Activated naive CD4-positive, alpha-beta T cell treated with anti-CD3 and anti-CD28 coated beads for 36 hours (primary cell): ENCODE measurements at regions of chr10 and their contacts with region 1.

Region 1: DNA sequence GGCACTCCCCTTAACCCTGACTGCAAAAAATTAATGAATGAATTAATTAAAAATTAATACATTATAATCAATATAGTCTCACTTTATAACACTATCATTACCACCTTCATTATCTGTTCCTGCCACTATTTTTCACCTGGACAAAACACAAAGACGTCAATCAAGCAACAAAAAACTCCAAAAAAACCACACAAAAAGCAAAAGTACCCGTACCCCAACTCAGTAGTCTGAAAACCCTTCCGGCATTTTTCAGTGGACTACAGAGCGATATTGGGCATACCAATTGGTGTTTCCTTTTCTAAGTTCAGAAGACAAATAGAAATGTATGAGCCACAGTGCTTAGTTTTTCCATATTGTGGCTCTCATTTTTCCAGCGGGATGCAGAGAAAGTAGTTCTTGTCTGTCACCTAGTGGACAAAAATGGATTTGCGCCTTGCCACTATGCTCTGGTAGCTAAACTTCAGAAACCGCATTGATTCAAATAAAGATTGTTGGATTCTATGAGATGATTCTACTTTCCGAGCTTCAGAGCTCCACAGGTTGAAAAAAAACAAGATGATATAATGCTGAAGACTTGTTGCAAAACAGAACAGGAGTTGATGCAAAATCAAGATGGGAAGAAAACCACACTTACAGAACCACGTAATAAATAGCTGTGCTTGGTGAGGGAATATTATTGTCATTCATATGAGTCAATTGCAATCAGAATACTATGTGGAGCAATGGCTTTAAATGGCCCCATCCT is 50.6 kb upstream of the ITGB1 start:
- DNase-seq: peak; percentile 81
- H3K4me3 Mint-ChIP-seq: peak overlapping the region; percentile 52
- H3K27ac Mint-ChIP-seq: peak overlapping the region; percentile 9
- H3K4me1 Mint-ChIP-seq: peaks cover 34% of the 10 kb centered on the region
- H3K27me3 Mint-ChIP-seq: peaks cover 9% of the 10 kb centered on the region

Region 2: GRCh38 chr10:32190890-32191491 is 817.7 kb before region 1 on chr10:
- CTCF ChIA-PET with region 1: no interaction called
- intact Hi-C with region 1: loop called (anchors 5 kb)
- DNase-seq: no peak
- H3K4me3 Mint-ChIP-seq: no peak overlapping the region
- H3K27ac Mint-ChIP-seq: no peak overlapping the region
- H3K4me1 Mint-ChIP-seq: peaks cover 2% of the 10 kb centered on the region
- H3K27me3 Mint-ChIP-seq: no peaks in the 10 kb centered on the region

Region 3: GRCh38 chr10:32367793-32368453 is 640.7 kb before region 1 on chr10:
- CTCF ChIA-PET with region 1: no interaction called
- intact Hi-C with region 1: loop called (anchors 2 kb)
- DNase-seq: peak; percentile 88
- H3K4me3 Mint-ChIP-seq: peak overlapping the region; percentile 41
- H3K27ac Mint-ChIP-seq: peak overlapping the region; percentile 59
- H3K4me1 Mint-ChIP-seq: peaks cover 65% of the 10 kb centered on the region
- H3K27me3 Mint-ChIP-seq: no peaks in the 10 kb centered on the region

Region 4: GRCh38 chr10:32790483-32790882 is 218.2 kb before region 1 on chr10:
- CTCF ChIA-PET with region 1: interaction called, 11 read pairs
- intact Hi-C with region 1: loop called (anchors 1 kb)
- DNase-seq: no peak
- H3K4me3 Mint-ChIP-seq: no peak overlapping the region
- H3K27ac Mint-ChIP-seq: no peak overlapping the region
- H3K4me1 Mint-ChIP-seq: no peaks in the 10 kb centered on the region
- H3K27me3 Mint-ChIP-seq: no peaks in the 10 kb centered on the region

Region 5: GRCh38 chr10:32980558-32981468 is 27.9 kb before region 1 on chr10:
- CTCF ChIA-PET with region 1: interaction called, 7 read pairs
- intact Hi-C with region 1: loop called (anchors 2 kb)
- DNase-seq: peak; percentile 90
- H3K4me3 Mint-ChIP-seq: peak overlapping the region; percentile 87
- H3K27ac Mint-ChIP-seq: peak overlapping the region; percentile 73
- H3K4me1 Mint-ChIP-seq: peaks cover 21% of the 10 kb centered on the region
- H3K27me3 Mint-ChIP-seq: no peaks in the 10 kb centered on the region

Region 6: GRCh38 chr10:33248638-33249037 is 240.0 kb after region 1 on chr10:
- CTCF ChIA-PET with region 1: no interaction called
- intact Hi-C with region 1: loop called (anchors 5 kb)
- DNase-seq: peak; percentile 49
- H3K4me3 Mint-ChIP-seq: no peak overlapping the region
- H3K27ac Mint-ChIP-seq: no peak overlapping the region
- H3K4me1 Mint-ChIP-seq: peaks cover 75% of the 10 kb centered on the region
- H3K27me3 Mint-ChIP-seq: no peaks in the 10 kb centered on the region